ENCODE measurements at regions of chr6 and their contacts with region 1.

Region 1: DNA sequence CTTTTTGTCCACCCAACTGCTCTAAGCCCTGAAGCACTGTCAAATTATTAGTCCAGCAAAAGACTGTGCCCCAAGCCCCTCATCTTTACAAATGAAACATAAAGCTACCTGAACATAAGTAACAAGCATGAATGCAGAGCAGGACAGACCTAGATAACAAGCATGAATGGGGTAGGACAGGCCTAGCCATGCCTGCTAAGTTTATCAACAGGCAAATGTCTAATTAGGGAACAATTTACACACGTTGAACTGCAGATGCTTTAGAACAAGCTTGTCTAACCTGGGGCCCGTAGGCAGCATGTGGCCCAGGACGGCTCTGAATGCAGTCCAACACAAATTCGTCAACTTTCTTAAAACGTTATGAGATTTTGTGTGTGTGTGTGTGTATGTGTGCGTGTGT is 13.6 kb downstream of the FBXO30 start:
- DNase-seq: no peak
- H3K4me3 ChIP-seq: no peak overlapping the region
- H3K27ac ChIP-seq: no peak overlapping the region
- H3K4me1 ChIP-seq: no peaks in the 10 kb centered on the region
- H3K27me3 ChIP-seq: no peaks in the 10 kb centered on the region
- CTCF ChIP-seq: no peak
- POLR2A ChIP-seq: no peak

Region 2: GRCh38 chr6:145963216-145964068 is 162.4 kb after region 1 on chr6:
- intact Hi-C with region 1: loop called (anchors 5 kb)
- DNase-seq: peak; percentile 35 to 62
- H3K4me3 ChIP-seq: peak overlapping the region; percentile 75 to 98 (median 77)
- H3K27ac ChIP-seq: peak overlapping the region; percentile 80 to 95
- H3K4me1 ChIP-seq: peaks cover 0 to 4% of the 10 kb centered on the region in 2 donors
- H3K27me3 ChIP-seq: no peaks in the 10 kb centered on the region
- CTCF ChIP-seq: no peak
- POLR2A ChIP-seq: no peak